Heart right ventricle (tissue), 16 donors: ENCODE measurements at regions of chr14 and their contacts with region 1.

Region 1: DNA sequence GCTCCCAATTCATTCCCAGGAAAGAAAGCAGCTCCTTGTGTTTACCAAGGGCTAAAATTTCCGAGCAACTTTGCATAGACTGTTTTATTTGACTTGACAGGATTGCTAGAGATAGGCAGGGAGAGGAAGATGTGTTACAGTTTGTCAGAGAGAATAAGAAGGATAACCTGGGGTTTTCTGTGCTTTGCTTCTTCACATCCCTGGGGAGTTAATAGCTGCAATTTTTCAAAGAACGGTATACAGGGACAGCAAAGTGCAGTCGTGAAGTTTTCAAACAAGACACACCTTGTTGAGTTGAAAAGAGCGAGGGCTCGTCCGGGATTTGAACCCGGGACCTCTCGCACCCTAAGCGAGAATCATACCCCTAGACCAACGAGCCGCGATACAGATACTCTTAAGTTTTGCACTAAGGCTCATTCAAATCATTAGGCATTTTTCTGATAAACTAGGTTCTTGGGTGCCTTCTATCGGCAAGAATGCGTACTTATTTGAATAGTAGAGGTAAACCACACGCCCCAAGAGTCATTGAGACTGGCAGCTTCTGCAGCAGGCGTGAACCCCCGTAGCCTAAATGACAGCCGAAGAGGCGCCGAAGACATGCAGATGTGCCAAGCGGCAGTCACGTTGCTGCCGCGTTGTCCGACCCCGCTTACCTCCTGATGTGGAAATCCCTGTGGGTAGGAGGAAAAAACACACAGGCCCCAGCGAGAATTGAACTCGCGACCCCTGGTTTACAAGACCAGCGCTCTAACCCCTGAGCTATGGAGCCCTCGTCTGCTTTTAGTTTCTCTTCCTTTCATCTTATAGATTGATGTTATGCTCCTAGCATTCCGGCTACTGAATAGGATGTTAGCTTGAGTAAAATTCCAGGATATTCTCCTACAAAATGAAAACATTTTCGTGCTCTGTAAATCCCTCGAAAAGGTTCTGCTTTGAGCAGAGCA is 22.2 kb upstream of the RNASE12 start:
- DNase-seq: peak; percentile 68 to 81
- ATAC-seq: peak; percentile 66 to 91 (median 86)
- H3K4me3 ChIP-seq: peak overlapping the region; percentile 9 to 68 (median 58)
- H3K27ac ChIP-seq: peak overlapping the region in 9 of 10 donors; percentile 20 to 82 (median 54)
- H3K4me1 ChIP-seq: peaks cover 3 to 52% (median 22%) of the 10 kb centered on the region in 9 donors
- H3K27me3 ChIP-seq: peaks cover 0 to 5% (median 0%) of the 10 kb centered on the region in 7 donors
- CTCF ChIP-seq: peak; percentile 52 to 80 (median 70)

Region 2: GRCh38 chr14:20327005-20327869 is 286.1 kb before region 1 on chr14:
- intact Hi-C with region 1: loop called in 9 of 10 experiments (anchors 1 to 10 kb)
- DNase-seq: peak in 1 of 2 donors; percentile 46
- ATAC-seq: peak in 3 of 8 donors; percentile 54 to 64 (median 55)
- H3K4me3 ChIP-seq: no peak overlapping the region
- H3K27ac ChIP-seq: peak overlapping the region in 3 of 10 donors; percentile 3 to 47 (median 6)
- H3K4me1 ChIP-seq: peaks cover 0 to 36% (median 23%) of the 10 kb centered on the region in 9 donors
- H3K27me3 ChIP-seq: no peaks in the 10 kb centered on the region
- CTCF ChIP-seq: peak; percentile 57 to 90 (median 81)

Region 3: DNA sequence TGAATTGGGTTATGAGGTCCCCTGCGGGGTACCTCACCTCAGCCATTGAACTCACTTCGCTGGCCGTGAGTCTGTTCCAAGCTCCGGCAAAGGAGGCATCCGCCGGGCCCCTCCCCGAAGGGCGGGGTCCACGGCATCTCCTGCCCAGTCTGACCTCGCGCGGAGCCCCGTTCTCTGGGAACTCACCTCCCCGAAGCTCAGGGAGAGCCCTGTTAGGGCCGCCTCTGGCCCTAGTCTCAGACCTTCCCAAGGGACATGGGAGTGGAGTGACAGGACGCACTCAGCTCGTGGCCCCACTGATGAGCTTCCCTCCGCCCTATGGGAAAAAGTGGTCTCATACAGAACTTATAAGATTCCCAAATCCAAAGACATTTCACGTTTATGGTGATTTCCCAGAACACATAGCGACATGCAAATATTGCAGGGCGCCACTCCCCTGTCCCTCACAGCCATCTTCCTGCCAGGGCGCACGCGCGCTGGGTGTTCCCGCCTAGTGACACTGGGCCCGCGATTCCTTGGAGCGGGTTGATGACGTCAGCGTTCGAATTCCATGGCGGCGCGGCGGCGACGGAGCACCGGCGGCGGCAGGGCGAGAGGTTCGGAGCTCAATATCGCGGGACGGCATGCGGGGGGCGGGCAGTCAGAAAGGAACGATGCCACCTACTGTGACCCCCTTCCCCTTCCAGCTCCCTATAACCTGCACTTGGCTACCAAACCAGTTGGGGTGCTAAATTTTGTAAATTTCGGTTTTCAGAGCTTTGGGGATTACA is 270.1 kb before region 1 on chr14 and contains the start of gene PARP2:
- intact Hi-C with region 1: loop called in 3 of 10 experiments (anchors 5 kb)
- DNase-seq: peak; percentile 96 to 97
- ATAC-seq: peak; percentile 98 to 99 (median 98)
- H3K4me3 ChIP-seq: peak within 1 kb of the TSS; percentile 55 to 87 (median 68)
- H3K27ac ChIP-seq: peak within 1 kb of the TSS; percentile 67 to 94 (median 89)
- H3K4me1 ChIP-seq: peaks cover 0 to 16% (median 7%) of the 10 kb centered on the region in 9 donors
- H3K27me3 ChIP-seq: no peaks in the 10 kb centered on the region
- CTCF ChIP-seq: peak in 1 of 9 donors; percentile 5
- total RNA-seq, gene PARP2: 13.6 to 18.4 (median 16.0) TPM

Region 4: GRCh38 chr14:20454516-20455354 is 158.6 kb before region 1 on chr14 and contains the starts of genes APEX1 and OSGEP:
- intact Hi-C with region 1: loop called in 4 of 10 experiments (anchors 5 kb)
- DNase-seq: peak; percentile 96 to 99
- ATAC-seq: peak; percentile 96 to 99 (median 97)
- H3K4me3 ChIP-seq: peak within 1 kb of the TSS; percentile 66 to 98 (median 74)
- H3K27ac ChIP-seq: peak within 1 kb of the TSS; percentile 83 to 97 (median 91)
- H3K4me1 ChIP-seq: peaks cover 0 to 62% (median 33%) of the 10 kb centered on the region in 9 donors
- H3K27me3 ChIP-seq: no peaks in the 10 kb centered on the region
- CTCF ChIP-seq: no peak
- total RNA-seq, gene APEX1: 57.1 to 103 (median 70.6) TPM
- total RNA-seq, gene OSGEP: 17.6 to 25.3 (median 21.8) TPM

Region 5: GRCh38 chr14:20469890-20470602 is 143.3 kb before region 1 on chr14:
- intact Hi-C with region 1: loop called in 1 of 10 experiments (anchors 5 kb)
- DNase-seq: peak in 1 of 2 donors; percentile 31
- ATAC-seq: peak; percentile 50 to 87 (median 72)
- H3K4me3 ChIP-seq: peak overlapping the region; percentile 48 to 97 (median 70)
- H3K27ac ChIP-seq: peak overlapping the region; percentile 52 to 97 (median 88)
- H3K4me1 ChIP-seq: peaks cover 0 to 43% (median 26%) of the 10 kb centered on the region in 9 donors
- H3K27me3 ChIP-seq: no peaks in the 10 kb centered on the region
- CTCF ChIP-seq: no peak

Region 6: GRCh38 chr14:20632682-20633428 is 19.5 kb after region 1 on chr14:
- intact Hi-C with region 1: loop called in 1 of 10 experiments (anchors 2 kb)
- DNase-seq: no peak
- ATAC-seq: peak; percentile 7 to 85 (median 60)
- H3K4me3 ChIP-seq: peak overlapping the region in 8 of 10 donors; percentile 2 to 45 (median 30)
- H3K27ac ChIP-seq: no peak overlapping the region
- H3K4me1 ChIP-seq: peaks cover 0 to 37% (median 23%) of the 10 kb centered on the region in 9 donors
- H3K27me3 ChIP-seq: peaks cover 0 to 100% (median 58%) of the 10 kb centered on the region in 7 donors
- CTCF ChIP-seq: no peak

Region 7: GRCh38 chr14:20855652-20856291 is 242.4 kb after region 1 on chr14:
- intact Hi-C with region 1: loop called in 1 of 10 experiments (anchors 10 kb)
- DNase-seq: peak in 1 of 2 donors; percentile 57
- ATAC-seq: peak; percentile 82 to 96 (median 90)
- H3K4me3 ChIP-seq: no peak overlapping the region
- H3K27ac ChIP-seq: no peak overlapping the region
- H3K4me1 ChIP-seq: peaks cover 0 to 7% (median 0%) of the 10 kb centered on the region in 9 donors
- H3K27me3 ChIP-seq: peaks cover 0 to 22% (median 9%) of the 10 kb centered on the region in 7 donors
- CTCF ChIP-seq: peak; percentile 55 to 82 (median 77)